WTC11 (cell line): ENCODE measurements at regions of chr19 and their contacts with region 1.

Region 1: GRCh38 chr19:1672038-1672768 is 19.8 kb upstream of the TCF3 start:
- DNase-seq: peak; percentile 62
- ATAC-seq: peak; percentile 24
- H3K4me3 Mint-ChIP-seq: peak overlapping the region; percentile 41
- H3K27ac Mint-ChIP-seq: no peak overlapping the region
- H3K4me1 Mint-ChIP-seq: peaks cover 18% of the 10 kb centered on the region
- H3K27me3 Mint-ChIP-seq: peaks cover 90% of the 10 kb centered on the region
- CTCF ChIP-seq: peak; percentile 84

Region 2: DNA sequence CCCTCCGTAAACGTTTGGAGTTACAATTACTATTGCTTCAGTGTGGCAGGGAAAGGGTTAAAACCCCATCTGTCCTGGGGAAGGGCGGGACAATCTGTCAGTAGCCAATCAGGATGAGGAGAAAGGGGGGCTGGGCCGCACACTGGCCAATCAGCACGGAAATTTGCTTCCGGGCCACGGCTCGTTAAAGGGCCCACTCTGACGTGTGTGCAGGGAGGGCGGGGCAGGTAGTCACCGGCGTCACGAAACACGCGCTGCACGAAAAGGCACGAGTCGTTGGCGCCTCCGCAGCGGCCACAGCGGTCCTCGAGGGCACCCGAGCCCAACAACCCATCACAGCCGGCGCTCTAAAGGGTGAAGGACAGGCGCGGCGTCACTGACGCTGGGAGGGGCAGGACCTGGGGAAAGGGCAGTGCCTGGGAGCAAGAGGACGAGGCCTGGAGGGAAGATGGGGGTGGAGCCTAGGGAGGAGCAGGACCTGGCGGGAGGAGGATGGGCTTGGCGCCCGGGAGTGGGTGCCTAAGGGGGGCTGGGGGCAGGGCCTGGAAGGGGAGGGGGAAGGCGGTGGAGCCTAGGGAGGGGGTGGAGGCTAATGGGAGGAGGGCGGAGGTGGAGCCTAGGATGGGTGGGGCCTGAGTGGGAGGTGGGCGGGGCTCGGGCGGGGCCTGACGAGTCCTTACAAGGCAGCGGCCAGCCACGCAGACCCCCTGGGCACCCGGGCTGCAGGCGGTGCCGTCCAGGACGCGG is 164.3 kb before region 1 on chr19:
- CTCF ChIA-PET with region 1: no interaction called
- POLR2A ChIA-PET with region 1: no interaction called
- DNase-seq: peak; percentile 95
- ATAC-seq: peak; percentile 91
- H3K4me3 Mint-ChIP-seq: peak overlapping the region; percentile 94
- H3K27ac Mint-ChIP-seq: peak overlapping the region; percentile 99
- H3K4me1 Mint-ChIP-seq: no peaks in the 10 kb centered on the region; the same call in 1 of the 2 replicates
- H3K27me3 Mint-ChIP-seq: peaks cover 65% of the 10 kb centered on the region
- CTCF ChIP-seq: no peak

Region 3: GRCh38 chr19:1652471-1653299 is 19.5 kb before region 1 on chr19 and contains the start of gene TCF3:
- CTCF ChIA-PET with region 1: interaction called, 13 read pairs
- POLR2A ChIA-PET with region 1: no interaction called
- DNase-seq: peak; percentile 96
- ATAC-seq: peak; percentile 90
- H3K4me3 Mint-ChIP-seq: peak within 1 kb of the TSS; percentile 94
- H3K27ac Mint-ChIP-seq: no peak within 1 kb of the TSS; the same call in 1 of the 2 replicates
- H3K4me1 Mint-ChIP-seq: peaks cover 5% of the 10 kb centered on the region
- H3K27me3 Mint-ChIP-seq: no peaks in the 10 kb centered on the region; the same call in 1 of the 2 replicates
- CTCF ChIP-seq: no peak
- total RNA-seq, gene TCF3: 323 to 350 TPM (median 324 TPM) in 3 replicates

Region 4: GRCh38 chr19:1718420-1719291 is 46.5 kb after region 1 on chr19:
- CTCF ChIA-PET with region 1: interaction called, 14 read pairs
- POLR2A ChIA-PET with region 1: no interaction called
- DNase-seq: no peak
- ATAC-seq: peak; percentile 34
- H3K4me3 Mint-ChIP-seq: peak overlapping the region; percentile 51; the same call in 1 of the 2 replicates
- H3K27ac Mint-ChIP-seq: no peak overlapping the region
- H3K4me1 Mint-ChIP-seq: peaks cover 5% of the 10 kb centered on the region
- H3K27me3 Mint-ChIP-seq: peaks cover 54% of the 10 kb centered on the region
- CTCF ChIP-seq: no peak

Region 5: DNA sequence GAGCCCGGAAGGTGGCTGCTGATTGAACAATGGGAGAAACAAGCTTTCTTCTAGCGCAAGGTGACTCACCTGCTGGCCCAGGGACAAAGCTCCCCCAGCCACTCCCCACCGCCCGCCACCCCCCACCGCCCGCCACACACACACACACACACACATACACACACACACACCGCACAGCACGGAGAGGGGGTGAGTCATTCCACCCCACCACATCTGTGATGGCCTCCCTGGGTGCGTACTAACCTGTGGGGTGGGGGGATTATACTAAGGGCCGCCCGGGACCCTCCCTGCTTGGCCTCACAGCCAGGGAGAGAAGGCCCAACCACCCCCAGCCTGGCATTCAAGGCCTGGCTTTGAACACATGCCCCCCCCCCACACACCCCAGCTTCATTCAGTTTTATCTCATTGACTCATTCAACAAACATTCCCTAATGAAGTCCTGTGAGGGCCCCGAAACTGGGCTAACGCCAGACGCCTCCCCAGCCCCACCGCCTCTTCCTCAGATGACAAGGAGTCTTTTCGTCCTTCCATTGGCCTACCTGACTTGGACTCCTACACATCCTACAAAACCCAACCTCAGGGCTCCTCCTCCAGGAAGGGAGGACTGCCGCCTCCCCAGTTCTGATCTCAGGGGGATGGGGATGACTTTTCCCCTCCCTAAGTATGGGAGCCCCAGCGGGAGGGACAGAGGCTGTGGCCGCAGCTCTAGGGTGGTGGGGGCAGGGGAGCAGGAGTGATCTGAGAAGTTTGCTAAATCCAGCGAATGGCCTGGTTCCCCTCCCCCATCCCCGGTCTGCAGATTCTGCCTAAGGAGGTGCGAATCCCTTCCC is 75.3 kb after region 1 on chr19:
- CTCF ChIA-PET with region 1: interaction called, 20 read pairs
- POLR2A ChIA-PET with region 1: interaction called, 3 read pairs
- DNase-seq: peak; percentile 70
- ATAC-seq: peak; percentile 23
- H3K4me3 Mint-ChIP-seq: peak overlapping the region; percentile 65
- H3K27ac Mint-ChIP-seq: no peak overlapping the region
- H3K4me1 Mint-ChIP-seq: peaks cover 8% of the 10 kb centered on the region
- H3K27me3 Mint-ChIP-seq: peaks cover 96% of the 10 kb centered on the region
- CTCF ChIP-seq: no peak

Region 6: DNA sequence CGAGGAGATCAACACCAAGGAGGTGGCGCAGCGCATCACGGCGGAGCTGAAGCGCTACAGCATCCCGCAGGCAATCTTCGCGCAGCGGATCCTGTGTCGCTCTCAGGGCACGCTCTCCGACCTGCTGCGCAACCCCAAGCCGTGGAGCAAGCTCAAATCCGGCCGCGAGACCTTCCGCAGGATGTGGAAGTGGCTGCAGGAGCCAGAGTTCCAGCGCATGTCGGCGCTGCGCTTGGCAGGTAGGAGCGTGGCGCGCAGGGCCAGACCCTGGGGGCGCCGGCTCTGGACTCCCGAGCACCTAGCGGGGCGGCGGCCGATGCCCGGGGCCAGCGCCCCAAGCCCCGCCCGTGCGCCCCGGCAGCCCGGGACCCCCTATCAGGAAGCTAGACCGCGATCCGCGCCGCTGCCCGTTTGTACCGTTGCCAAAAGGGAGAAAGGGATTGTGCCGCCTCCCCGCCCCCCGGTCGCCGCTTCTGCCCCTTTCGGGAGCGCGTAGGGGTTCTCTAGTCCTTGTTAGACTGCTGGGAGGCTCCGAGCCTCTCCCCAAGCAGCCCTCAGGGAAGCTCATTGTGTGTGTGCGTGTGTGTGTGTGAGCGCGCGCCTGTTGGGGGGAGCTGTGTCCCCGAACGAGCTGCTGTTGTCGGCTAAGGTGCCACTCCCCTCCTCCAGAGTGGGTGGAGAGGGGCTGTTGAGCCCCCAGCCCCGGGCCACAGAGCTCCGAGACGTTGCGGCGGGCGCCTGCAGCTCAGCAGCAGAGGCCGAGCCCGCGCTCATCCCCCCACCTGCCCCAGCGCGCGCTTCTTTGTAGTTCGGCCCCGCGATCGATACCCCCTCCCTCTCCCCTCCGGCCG is 82.6 kb after region 1 on chr19:
- CTCF ChIA-PET with region 1: interaction called, 11 read pairs
- POLR2A ChIA-PET with region 1: no interaction called
- DNase-seq: no peak
- ATAC-seq: peak; percentile 5; the same call in 1 of the 2 replicates
- H3K4me3 Mint-ChIP-seq: peak overlapping the region; percentile 36; the same call in 1 of the 2 replicates
- H3K27ac Mint-ChIP-seq: no peak overlapping the region
- H3K4me1 Mint-ChIP-seq: peaks cover 11% of the 10 kb centered on the region
- H3K27me3 Mint-ChIP-seq: peaks cover 91% of the 10 kb centered on the region
- CTCF ChIP-seq: no peak

Region 7: DNA sequence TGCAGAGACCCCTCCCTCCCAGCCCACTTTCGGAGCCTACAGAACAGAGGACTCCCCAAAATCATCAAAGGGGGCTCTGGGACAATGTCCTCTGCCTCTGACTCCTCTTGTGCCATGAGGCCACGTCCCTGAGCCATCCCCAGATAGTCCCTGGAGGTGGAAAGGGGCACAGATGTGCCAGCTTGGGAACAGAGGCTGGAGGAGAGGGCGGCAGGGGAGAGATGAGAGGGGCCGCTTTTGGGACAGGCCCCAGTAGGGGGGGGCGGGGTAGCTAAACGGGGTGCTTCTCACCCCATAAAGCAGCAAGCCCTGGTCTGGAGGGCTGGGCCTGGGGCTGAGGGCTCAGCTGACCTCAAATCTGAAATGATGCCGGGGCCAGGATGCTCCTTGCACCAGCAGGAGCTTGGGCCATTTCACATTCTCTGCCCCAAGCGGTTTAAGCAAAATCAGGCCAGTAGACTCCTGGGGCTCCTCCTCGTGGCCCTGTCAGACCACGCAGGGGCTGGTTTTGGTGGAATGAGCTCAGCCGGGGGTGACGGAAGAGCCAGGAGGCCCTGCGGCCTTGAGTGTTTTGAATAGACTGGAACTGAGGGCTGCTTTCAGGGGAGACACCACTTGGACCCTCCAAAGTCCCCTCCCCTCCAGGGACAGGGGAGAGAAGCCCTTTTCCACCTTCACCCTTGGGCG is 108.2 kb after region 1 on chr19:
- CTCF ChIA-PET with region 1: interaction called, 11 read pairs
- POLR2A ChIA-PET with region 1: no interaction called
- DNase-seq: no peak
- ATAC-seq: no peak
- H3K4me3 Mint-ChIP-seq: no peak overlapping the region
- H3K27ac Mint-ChIP-seq: no peak overlapping the region
- H3K4me1 Mint-ChIP-seq: peaks cover 16% of the 10 kb centered on the region
- H3K27me3 Mint-ChIP-seq: peaks cover 86% of the 10 kb centered on the region
- CTCF ChIP-seq: no peak

Region 8: GRCh38 chr19:1789261-1790041 is 117.2 kb after region 1 on chr19:
- CTCF ChIA-PET with region 1: interaction called, 10 read pairs
- POLR2A ChIA-PET with region 1: no interaction called
- DNase-seq: no peak
- ATAC-seq: no peak
- H3K4me3 Mint-ChIP-seq: peak overlapping the region; percentile 48; the same call in 1 of the 2 replicates
- H3K27ac Mint-ChIP-seq: no peak overlapping the region
- H3K4me1 Mint-ChIP-seq: peaks cover 5% of the 10 kb centered on the region
- H3K27me3 Mint-ChIP-seq: peaks cover 29% of the 10 kb centered on the region
- CTCF ChIP-seq: no peak